Brain microvascular endothelial cell (primary cell): ENCODE measurements at regions of chr11 and their contacts with region 1.

Region 1: GRCh38 chr11:44110231-44110679 is 14.8 kb downstream of the EXT2 start:
- DNase-seq: peak; percentile 53
- H3K4me3 ChIP-seq: no peak overlapping the region
- H3K27ac ChIP-seq: no peak overlapping the region
- H3K27me3 ChIP-seq: no peaks in the 10 kb centered on the region
- CTCF ChIP-seq: peak; percentile 93

Region 2: DNA sequence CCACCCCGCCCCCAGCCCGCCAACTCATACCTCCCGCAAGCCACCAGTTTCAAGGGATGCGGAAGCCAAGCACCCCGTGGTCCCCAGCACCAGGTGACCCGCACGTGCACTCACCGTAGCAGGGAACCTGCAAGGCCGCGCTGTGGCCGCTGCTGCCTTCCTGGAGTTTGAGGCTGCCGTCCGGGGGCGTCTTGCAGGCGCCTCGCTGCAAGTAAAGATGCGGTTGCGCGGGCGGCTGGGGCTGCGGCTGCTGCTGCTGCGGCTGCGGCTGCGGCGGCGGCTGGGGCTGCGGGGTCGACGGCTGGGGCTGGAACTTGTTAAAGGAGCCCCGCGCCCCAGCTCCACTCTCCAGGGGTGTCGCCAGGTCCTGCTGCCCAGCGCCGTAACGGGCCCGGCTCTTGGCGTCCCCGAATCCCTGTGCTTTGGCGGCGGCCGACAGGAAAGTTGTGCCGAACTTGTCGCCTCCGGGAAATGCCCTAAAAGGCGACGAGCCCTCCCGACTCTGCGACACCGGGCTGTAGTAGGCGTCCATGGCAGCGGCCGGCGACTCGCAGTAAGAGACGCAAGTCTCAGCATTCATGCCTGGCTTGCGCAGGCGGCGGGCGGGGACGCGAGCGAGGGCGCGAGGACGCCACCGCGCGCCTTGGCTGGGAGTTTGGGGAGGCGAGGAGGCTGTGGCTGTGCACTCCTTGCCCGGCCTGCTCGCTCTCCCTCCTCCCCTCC is 199.4 kb after region 1 on chr11 and contains the start of gene ALX4:
- in situ Hi-C with region 1: loop called (anchors 25 kb)
- DNase-seq: no peak
- H3K4me3 ChIP-seq: peak within 1 kb of the TSS; percentile 26
- H3K27ac ChIP-seq: no peak within 1 kb of the TSS
- H3K27me3 ChIP-seq: peaks cover 85% of the 10 kb centered on the region
- CTCF ChIP-seq: no peak

Region 3: DNA sequence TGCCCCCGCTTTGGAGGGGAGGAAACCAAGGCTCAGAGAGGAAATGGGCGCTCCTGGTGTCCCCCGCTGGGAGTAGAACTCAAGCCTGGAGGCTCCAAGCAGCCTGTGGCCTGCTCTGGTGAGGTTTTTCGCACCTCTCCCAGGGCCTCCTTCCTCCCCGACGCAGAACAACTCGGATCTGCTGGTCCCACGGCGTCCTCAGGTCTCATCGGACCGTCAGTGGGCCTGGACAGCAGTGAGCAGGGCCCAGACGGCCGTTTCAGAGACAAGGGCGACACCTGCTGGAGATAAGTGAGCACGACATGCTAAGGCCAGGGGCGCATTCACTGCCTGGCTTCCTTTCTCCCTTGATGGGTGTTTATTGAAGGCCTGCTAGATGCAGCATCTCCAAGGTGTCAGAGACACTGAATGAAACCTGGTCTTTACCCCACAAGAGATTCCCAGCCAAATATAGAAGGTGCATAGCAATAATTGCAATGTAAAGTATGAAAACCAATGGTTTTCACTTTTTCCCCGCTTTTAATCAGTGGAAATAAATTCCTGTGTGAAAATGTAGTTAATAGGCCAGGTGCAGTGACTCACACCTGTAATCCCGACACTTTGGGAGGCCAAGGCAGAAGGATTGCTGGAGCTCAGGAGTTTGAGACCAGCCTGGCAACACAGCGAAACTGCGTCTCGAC is 428.3 kb after region 1 on chr11:
- in situ Hi-C with region 1: loop called (anchors 25 kb)
- DNase-seq: peak; percentile 65
- H3K4me3 ChIP-seq: no peak overlapping the region
- H3K27ac ChIP-seq: no peak overlapping the region
- H3K27me3 ChIP-seq: no peaks in the 10 kb centered on the region
- CTCF ChIP-seq: peak; percentile 94